Esophagus squamous epithelium (tissue), 5 donors: ENCODE measurements at regions of chr1 and their contacts with region 1.

Region 1: DNA sequence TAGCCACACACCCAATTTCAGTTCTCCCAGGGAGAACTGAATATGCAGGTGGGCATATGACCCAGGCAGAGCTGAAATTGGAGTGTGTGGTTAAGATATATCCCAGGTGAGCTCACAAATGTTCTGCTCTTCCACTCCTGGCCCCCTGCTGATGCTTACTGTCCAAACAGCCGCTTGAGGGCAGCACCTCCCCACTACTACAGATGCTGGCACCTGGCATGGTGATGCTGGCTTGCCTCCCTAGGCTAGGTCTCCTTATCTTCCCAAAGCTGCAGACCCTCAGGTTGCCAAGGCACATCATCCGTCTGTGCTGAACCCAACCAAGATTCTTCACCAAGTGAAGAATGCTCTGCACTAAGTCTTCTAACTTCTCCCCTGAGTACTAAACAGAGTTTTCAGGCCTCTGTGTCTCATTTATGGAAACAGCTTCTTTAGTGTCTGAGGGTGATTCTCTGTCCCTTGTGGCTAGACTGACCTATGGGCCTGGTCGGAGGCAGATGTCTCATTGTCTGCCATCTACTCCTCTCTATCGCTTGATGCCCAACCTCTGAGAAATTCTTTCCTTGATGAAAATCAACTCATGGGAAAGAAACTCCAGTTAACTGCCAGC is 27.2 kb downstream of the XCL1 start:
- DNase-seq: no peak
- H3K4me3 ChIP-seq: no peak overlapping the region
- H3K27ac ChIP-seq: no peak overlapping the region
- H3K4me1 ChIP-seq: no peaks in the 10 kb centered on the region
- H3K27me3 ChIP-seq: no peaks in the 10 kb centered on the region
- CTCF ChIP-seq: peak; percentile 54 to 86 (median 78)
- POLR2A ChIP-seq: no peak

Region 2: DNA sequence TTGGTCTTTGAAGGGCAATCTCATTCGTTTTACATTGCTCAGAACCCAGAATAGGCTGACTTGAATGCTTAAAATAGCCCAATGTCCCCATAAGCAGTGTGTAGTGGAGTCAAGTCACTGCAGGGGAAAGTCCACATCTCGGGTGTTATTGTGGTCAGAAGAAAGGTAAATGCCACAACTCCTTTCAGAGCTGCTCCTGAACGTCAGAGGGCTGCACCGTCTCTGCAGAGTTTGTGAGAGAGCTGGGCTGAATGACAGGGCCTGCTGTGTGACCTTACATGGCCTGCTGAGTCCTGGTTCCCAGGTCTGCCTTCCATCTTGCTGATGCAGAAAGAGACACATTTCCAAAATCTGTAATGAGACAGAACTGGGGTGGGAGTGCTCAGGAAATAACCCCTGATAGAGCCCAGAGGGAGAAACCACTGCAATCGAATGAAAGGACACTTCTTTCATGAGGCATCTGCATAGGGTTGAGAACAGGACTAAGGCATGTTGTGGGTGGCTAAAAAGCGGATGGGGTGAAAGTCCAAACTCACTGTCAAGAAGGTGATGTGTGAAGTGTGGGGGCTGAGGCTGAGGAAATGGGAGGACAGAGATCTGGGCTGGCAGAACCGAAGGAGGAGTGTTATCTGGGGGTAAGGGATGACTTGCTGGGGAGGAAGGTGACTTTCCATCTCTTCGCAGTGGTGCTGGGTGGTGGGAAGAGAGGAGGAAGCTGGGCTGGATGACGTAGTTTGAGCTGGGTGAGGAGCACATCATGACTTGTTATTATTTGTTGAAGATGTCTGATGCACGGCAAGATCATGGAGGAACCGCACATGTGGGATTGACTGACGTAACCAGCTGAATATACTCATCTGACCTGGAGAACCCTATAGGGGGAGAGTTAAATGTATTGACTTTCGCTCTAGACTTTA is 93.5 kb before region 1 on chr1:
- intact Hi-C with region 1: no loop called
- DNase-seq: no peak
- H3K4me3 ChIP-seq: no peak overlapping the region
- H3K27ac ChIP-seq: no peak overlapping the region
- H3K4me1 ChIP-seq: peaks cover 0 to 31% (median 7%) of the 10 kb centered on the region in 3 donors
- H3K27me3 ChIP-seq: no peaks in the 10 kb centered on the region
- CTCF ChIP-seq: no peak
- POLR2A ChIP-seq: no peak

Region 3: GRCh38 chr1:169348383-169349036 is 744.9 kb after region 1 on chr1:
- intact Hi-C with region 1: loop called (anchors 10 kb)
- DNase-seq: no peak
- H3K4me3 ChIP-seq: no peak overlapping the region
- H3K27ac ChIP-seq: no peak overlapping the region
- H3K4me1 ChIP-seq: no peaks in the 10 kb centered on the region
- H3K27me3 ChIP-seq: no peaks in the 10 kb centered on the region
- CTCF ChIP-seq: peak; percentile 63 to 81 (median 80)
- POLR2A ChIP-seq: no peak